AG04449 (cell line): ENCODE measurements at regions of chr1 and their contacts with region 1.

Region 1: DNA sequence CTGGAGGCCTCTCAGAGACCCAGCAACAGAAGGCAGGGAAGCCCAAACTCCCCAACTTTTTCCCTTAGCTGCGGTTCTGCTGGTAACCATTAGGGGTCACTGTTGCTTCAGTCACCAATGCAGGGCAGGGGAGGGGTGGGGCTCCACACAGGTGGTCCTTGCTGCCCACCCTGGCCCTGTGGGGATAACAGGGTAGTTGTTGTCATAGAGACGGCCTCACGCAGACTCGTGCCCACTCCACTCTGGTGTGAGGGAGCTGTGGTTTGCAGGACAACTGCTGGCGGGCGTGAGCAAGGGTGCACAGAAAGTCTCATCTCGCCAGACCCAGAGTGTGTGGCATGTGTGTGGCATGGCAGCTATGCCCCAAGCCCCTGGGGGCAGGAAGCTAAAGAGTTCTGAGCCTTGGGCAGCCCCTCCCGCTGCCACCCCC is 19.9 kb downstream of the INSRR start:
- DNase-seq: no peak
- H3K4me3 ChIP-seq: no peak overlapping the region
- CTCF ChIP-seq: peak; percentile 85

Region 2: DNA sequence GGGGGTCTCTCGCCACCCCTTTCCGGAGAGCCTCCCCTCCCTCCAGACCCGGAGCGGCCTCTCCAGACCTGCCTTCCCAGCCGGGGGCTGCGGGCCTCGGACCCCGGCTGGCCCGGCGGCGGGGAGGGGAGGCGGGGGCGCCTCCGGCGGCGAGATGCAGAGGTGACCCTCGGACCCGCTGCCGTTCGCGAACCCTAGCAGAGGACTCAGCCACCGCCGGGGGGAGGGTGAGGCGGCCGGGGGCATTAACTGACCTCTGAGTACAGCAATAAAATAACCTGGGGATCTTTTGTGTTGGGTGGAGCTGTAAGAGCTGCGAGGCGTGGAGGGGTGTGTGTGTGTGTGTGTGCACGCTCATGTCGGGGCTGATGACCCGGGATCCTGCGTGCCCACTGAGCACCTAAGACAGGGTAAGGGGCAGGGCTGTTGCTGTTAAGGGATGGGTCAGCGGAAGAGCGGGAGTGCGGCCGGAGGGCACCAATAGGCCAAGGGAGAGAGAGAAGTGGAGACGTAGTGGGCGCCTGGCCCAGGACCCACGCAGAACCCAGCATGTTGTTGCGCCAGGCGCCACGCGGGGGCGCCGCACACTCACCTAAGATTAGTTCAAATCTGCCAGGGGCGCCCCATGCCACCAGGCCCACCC is 213.4 kb before region 1 on chr1:
- CTCF ChIA-PET with region 1: no interaction called
- POLR2A ChIA-PET with region 1: no interaction called
- DNase-seq: no peak
- H3K4me3 ChIP-seq: no peak overlapping the region
- CTCF ChIP-seq: peak; percentile 74

Region 3: DNA sequence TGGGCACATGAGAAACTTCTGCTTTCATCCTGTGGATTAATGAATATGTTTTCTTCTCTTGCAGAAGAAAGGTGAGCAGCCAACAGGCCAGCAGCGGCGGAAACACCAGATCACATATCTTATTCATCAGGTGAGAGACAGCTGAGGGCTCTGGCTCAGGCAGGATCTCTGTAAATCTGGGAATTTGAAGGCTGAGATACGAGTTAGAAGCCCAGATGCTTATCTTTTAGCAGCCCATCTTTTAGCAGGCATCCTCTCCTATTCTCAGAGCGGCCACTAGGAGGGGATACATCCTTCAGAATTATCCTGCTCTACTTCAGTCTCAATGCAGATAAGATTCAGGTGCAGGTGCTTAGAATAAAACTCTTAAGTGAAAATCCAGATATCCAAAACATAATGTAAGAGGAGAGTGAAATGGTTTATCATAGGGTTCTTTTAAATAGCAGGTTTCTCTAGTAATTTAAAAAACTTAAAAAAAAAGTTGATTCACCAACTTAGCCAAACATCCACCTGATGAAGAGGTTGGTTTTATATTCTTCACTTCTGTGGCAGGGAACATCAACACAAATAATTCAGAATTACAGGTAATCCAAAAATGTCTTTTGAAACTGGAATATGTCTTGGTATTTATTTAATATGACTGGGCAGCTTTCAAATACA is 41.7 kb before region 1 on chr1:
- CTCF ChIA-PET with region 1: interaction called, 34 read pairs
- POLR2A ChIA-PET with region 1: no interaction called
- DNase-seq: no peak
- H3K4me3 ChIP-seq: no peak overlapping the region
- CTCF ChIP-seq: peak; percentile 73

Region 4: GRCh38 chr1:156821801-156822200 is 17.2 kb before region 1 on chr1:
- CTCF ChIA-PET with region 1: interaction called, 121 read pairs
- POLR2A ChIA-PET with region 1: interaction called, 3 read pairs
- DNase-seq: peak; percentile 19
- H3K4me3 ChIP-seq: no peak overlapping the region
- CTCF ChIP-seq: no peak

Region 5: GRCh38 chr1:156869455-156869854 is 30.5 kb after region 1 on chr1:
- CTCF ChIA-PET with region 1: interaction called, 21 read pairs
- POLR2A ChIA-PET with region 1: no interaction called
- DNase-seq: no peak
- H3K4me3 ChIP-seq: no peak overlapping the region
- CTCF ChIP-seq: no peak

Region 6: DNA sequence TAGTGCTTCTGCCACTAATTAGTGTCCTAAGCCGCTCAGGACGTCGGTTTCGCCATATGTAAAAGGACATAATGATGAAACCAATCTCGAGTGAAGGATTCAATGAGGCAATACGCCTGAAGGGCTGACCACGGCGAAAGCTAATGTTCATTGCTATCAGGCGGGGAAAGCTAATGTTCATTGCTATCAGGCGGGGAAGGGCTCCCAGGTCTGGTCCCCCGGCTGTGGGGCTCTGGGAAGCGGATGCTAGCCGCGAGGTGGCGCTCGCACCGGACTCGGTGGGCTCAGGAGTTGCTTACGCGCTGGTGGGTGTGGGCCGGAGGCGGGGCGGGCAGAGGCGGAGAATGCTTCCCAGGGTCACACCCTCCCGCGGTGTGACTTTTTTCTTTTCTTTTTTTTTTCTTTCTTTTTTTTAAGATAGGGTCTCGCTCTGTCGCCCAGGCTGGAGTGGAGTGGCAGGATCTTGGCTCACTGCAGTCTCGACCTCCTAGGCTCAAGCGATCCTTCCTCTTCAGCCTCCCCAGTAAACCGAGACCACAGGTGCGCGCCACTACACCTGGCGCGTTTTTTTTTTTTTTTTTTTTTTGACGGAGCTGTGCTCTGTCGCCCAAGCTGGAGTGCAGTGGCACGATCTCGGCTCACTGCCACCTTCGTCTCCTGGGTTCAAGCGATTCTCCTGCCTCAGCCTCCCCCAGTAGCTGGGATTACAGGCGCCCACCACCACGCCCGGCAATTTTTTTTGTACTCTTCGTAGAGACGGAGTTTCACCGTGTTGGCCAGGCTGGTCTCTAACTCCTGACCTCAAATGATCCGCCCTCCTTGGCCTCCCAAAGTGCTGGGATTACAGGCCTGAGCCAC is 53.4 kb after region 1 on chr1:
- CTCF ChIA-PET with region 1: interaction called, 121 read pairs
- POLR2A ChIA-PET with region 1: no interaction called
- DNase-seq: no peak
- H3K4me3 ChIP-seq: peak overlapping the region; percentile 30
- CTCF ChIP-seq: peak; percentile 97

Region 7: DNA sequence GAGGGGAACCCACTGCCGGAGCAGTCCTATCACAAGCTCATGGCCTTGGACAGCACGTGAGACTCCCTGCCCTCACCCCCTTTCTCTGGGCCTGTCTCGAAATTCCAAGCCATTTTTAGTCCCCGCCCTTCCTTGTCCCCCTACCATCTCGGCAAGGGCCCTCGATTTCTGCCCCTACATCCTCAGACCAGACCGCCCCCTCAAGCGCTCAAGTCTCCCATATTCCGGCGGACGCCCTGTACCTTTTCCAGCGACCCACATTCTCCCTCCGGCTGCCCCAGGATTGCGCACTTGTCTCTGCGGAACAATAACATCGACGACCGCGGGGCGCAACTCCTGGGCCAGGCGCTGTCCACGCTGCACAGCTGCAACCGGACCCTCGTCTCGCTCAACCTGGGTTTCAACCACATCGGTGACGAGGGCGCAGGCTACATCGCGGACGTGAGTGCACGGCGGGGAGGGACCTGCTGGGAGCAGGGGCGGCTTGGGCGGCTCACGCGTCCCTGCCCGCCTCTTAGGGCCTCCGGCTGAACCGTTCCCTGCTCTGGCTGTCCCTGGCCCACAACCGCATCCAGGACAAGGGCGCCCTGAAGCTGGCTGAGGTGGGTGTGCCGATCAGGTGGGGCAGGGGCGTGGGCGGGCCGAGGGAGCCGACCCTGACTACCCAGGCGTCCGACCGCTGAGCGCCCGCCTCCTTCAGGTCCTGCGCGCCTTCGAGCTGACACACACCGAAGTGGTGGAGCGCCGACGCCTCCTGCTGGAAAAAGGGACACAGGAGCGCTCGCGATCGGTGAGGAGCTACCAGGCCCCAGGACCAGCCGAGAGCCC is 88.4 kb after region 1 on chr1:
- CTCF ChIA-PET with region 1: interaction called, 41 read pairs
- POLR2A ChIA-PET with region 1: no interaction called
- DNase-seq: no peak
- H3K4me3 ChIP-seq: peak overlapping the region; percentile 55
- CTCF ChIP-seq: peak; percentile 94

Region 8: GRCh38 chr1:157047033-157047410 is 208.0 kb after region 1 on chr1:
- CTCF ChIA-PET with region 1: no interaction called
- POLR2A ChIA-PET with region 1: no interaction called
- DNase-seq: no peak
- H3K4me3 ChIP-seq: no peak overlapping the region
- CTCF ChIP-seq: no peak